ENCODE measurements at regions of chr4 and their contacts with region 1.

Region 1: GRCh38 chr4:7987148-7987989 is 47.7 kb upstream of the AFAP1 start:
- DNase-seq: peak; percentile 76
- H3K4me3 Mint-ChIP-seq: no peak overlapping the region
- H3K27ac Mint-ChIP-seq: no peak overlapping the region
- H3K4me1 Mint-ChIP-seq: no peaks in the 10 kb centered on the region
- H3K27me3 Mint-ChIP-seq: peaks cover 8% of the 10 kb centered on the region
- CTCF ChIP-seq: peak; percentile 81

Region 2: GRCh38 chr4:7649741-7650531 is 337.4 kb before region 1 on chr4:
- CTCF ChIA-PET with region 1: no interaction called
- intact Hi-C with region 1: no loop called
- DNase-seq: no peak
- H3K4me3 Mint-ChIP-seq: no peak overlapping the region
- H3K27ac Mint-ChIP-seq: no peak overlapping the region
- H3K4me1 Mint-ChIP-seq: peaks cover 11% of the 10 kb centered on the region
- H3K27me3 Mint-ChIP-seq: peaks cover 18% of the 10 kb centered on the region
- CTCF ChIP-seq: no peak

Region 3: GRCh38 chr4:7719354-7720174 is 267.8 kb before region 1 on chr4:
- CTCF ChIA-PET with region 1: no interaction called
- intact Hi-C with region 1: loop called (anchors 1 kb)
- DNase-seq: peak; percentile 72
- H3K4me3 Mint-ChIP-seq: no peak overlapping the region
- H3K27ac Mint-ChIP-seq: no peak overlapping the region
- H3K4me1 Mint-ChIP-seq: no peaks in the 10 kb centered on the region
- H3K27me3 Mint-ChIP-seq: peaks cover 93% of the 10 kb centered on the region
- CTCF ChIP-seq: peak; percentile 50

Region 4: DNA sequence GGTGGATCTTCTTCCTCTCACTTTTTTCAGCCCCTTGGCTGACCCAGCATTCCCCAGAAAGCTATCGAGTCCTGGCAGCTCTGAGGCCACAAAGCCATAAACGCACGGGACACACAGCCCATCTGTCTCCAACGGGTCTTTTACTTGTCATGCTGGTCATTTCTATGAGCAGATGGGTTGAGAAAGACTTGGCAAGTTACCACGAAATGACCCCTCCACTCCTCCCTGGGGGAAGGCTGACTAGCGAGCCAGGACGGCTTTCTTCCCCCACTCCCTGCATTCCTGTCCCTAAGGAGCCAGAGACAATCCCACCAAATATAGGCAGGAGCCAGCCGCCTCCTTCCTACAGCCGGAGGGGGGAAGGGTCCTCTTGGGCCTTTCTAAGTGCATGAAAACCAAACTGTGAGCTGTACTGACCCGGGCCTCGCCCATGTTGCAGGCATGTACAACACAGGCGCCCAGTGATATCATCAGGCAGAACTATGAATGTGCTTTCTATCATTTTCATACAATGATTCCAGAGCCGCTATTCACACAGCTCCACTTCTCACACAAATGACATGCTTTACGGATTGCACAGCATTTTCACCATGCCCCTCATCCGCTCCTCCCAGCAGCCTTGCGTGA is 76.3 kb before region 1 on chr4:
- CTCF ChIA-PET with region 1: no interaction called
- intact Hi-C with region 1: no loop called
- DNase-seq: no peak
- H3K4me3 Mint-ChIP-seq: no peak overlapping the region
- H3K27ac Mint-ChIP-seq: no peak overlapping the region
- H3K4me1 Mint-ChIP-seq: peaks cover 40% of the 10 kb centered on the region
- H3K27me3 Mint-ChIP-seq: no peaks in the 10 kb centered on the region
- CTCF ChIP-seq: no peak

Region 5: GRCh38 chr4:8198906-8199593 is 211.7 kb after region 1 on chr4 and contains the start of gene SH3TC1:
- CTCF ChIA-PET with region 1: no interaction called
- intact Hi-C with region 1: no loop called
- DNase-seq: peak; percentile 92
- H3K4me3 Mint-ChIP-seq: peak within 1 kb of the TSS; percentile 79
- H3K27ac Mint-ChIP-seq: peak within 1 kb of the TSS; percentile 54
- H3K4me1 Mint-ChIP-seq: peaks cover 27% of the 10 kb centered on the region
- H3K27me3 Mint-ChIP-seq: no peaks in the 10 kb centered on the region
- CTCF ChIP-seq: no peak
- total RNA-seq, gene SH3TC1: 7.8 and 10.8 TPM in 2 replicates

Measured in Calu3 (cell line).